HAP-1 (cell line): ENCODE measurements at regions of chr17 and their contacts with region 1.

Region 1: GRCh38 chr17:3012926-3013581 is 50.4 kb downstream of the OR1D5 start:
- DNase-seq: peak; percentile 23 to 69
- H3K4me3 ChIP-seq: no peak overlapping the region
- H3K4me1 ChIP-seq: no peaks in the 10 kb centered on the region
- H3K27me3 ChIP-seq: no peaks in the 10 kb centered on the region

Region 2: DNA sequence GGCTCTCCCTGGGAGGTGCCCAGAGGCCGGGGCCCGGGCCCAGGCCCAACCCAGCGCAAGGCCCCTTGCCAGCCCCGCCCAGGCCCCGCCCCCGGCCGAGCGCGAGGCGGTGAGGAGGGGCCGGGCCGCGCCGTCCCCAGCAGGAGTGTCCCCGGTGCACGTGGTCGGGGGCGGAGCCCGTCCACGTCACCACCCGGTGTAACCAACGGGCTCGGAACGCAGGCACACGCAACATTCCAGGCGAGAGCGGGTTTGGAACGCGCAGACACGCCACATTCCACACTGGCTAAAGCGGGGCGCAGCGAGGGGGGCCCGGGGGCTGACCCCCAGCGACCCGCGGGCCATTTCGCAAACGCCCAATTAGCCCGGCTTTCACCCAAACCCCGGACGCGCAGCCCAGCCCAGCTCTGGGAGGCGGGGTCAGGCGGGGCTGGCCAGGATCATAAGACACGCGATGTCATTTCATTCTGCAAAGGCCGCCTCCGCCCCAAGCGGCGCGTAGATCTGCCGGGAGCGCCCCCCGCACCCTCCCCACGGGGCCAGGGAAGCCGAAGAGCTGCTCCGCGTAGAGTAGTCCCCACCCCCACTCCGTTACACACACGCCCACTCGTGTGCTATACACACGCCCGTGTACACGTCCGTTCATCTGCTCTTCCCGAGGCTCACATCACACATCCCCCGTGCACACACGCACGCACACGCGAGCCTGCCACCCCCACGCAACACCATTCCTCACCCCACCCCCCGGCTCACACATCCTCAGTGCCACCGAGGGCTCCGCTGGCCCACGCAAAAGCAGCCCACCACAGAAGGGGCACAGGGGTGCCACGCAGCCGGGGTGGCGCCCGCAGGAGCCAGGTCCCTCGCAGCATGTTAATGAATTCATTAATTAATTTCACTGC is 613.2 kb before region 1 on chr17:
- in situ Hi-C with region 1: loop called (anchors 25 kb)
- DNase-seq: peak; percentile 90 to 95
- H3K4me3 ChIP-seq: peak overlapping the region; percentile 72
- H3K4me1 ChIP-seq: peaks cover 33% of the 10 kb centered on the region
- H3K27me3 ChIP-seq: no peaks in the 10 kb centered on the region

Region 3: GRCh38 chr17:2736956-2737355 is 276.1 kb before region 1 on chr17:
- in situ Hi-C with region 1: no loop called
- DNase-seq: peak in 1 of 2 experiments; percentile 36
- H3K4me3 ChIP-seq: no peak overlapping the region
- H3K4me1 ChIP-seq: no peaks in the 10 kb centered on the region
- H3K27me3 ChIP-seq: no peaks in the 10 kb centered on the region

Region 4: DNA sequence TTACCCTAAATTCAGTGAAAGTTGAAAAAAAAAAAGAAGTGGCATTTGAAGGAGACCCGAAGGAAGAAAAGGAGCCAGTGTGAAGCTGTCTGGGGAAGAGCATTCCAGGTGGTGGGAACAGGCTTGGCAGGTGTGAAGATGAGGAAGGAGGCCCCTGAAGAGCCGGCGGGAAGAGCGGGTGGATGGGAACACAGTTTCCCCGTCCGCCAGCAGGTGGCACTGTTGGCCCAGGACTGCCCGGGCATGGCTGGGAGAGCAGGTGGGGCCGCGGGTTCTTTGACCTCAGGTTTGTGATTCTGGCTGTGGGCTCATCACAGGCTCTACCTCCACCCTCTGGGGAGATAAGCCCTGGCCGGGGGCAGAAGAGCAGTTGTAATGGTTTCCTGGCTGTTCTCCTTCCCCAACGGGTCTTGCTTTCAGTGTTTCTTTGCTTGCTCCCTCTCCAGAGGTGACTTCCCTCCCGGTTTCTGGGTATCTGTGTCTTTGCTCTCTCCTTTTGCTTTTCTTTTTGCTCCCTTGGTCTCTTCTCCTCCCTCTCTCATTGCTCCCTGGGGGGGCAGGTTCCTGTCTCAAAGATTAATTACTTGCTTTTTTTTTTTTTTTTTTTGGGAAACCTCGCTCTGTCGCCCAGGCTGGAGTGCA is 184.5 kb before region 1 on chr17:
- in situ Hi-C with region 1: loop called (anchors 5 kb)
- DNase-seq: peak; percentile 47 to 91
- H3K4me3 ChIP-seq: no peak overlapping the region
- H3K4me1 ChIP-seq: no peaks in the 10 kb centered on the region
- H3K27me3 ChIP-seq: no peaks in the 10 kb centered on the region

Region 5: DNA sequence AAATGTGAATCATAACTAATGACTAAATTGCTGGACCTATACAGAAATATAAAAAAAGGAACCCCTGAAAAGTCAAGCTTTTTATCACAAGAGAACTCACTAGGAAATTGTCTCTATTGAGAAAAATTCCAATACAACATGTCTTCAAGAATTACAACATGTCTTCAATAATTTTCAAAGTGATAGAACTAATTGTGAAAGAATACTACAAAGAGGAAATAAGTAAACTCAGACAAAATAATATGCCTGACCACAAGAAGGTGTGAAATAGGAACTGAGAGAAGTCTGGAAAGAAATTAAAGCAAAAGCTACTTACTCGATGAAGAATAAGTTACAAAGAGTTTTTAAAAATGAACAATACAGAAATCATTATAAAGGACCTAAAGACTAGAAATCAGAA is 144.2 kb after region 1 on chr17:
- in situ Hi-C with region 1: no loop called
- DNase-seq: no peak
- H3K4me3 ChIP-seq: no peak overlapping the region
- H3K4me1 ChIP-seq: no peaks in the 10 kb centered on the region
- H3K27me3 ChIP-seq: no peaks in the 10 kb centered on the region

Region 6: DNA sequence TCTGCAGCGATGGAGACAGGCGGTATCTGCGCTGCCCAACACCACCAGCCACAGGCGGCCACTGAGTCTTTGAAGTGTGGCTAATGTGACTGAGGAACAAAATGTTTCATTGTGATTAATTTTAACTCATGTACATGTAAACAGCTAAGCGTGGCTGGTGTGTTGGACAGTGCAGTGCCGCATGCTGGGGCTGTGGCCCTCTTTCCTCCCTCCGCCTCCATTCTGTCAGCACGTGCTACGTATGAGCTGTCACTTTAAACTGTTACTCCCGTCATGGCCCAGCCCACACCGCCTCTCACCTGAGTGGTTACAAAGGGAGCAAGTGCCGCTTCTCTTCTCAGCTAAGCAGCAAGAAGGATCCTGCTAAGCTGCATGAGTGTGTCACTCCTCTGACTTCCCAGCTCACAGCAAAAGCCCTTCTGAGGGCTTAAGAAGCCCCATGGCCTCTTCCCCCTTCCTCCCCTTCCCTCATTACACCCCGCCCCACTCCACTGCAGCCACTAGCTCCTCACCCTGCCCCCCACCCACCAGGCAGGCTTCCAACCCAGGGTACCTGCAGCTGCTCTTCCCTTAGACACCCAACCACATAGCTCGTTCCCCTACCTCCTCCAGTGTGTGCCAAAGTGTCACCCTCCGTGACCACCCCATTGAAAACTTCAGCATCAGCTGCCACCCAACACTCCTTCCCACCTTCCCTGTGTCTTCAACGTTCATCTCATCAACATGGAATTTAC is 725.7 kb after region 1 on chr17:
- in situ Hi-C with region 1: no loop called
- DNase-seq: no peak
- H3K4me3 ChIP-seq: no peak overlapping the region
- H3K4me1 ChIP-seq: no peaks in the 10 kb centered on the region
- H3K27me3 ChIP-seq: no peaks in the 10 kb centered on the region